ENCODE measurements at regions of chr11 and their contacts with region 1.

Region 1: GRCh38 chr11:6554828-6555706 is 48.3 kb downstream of the RRP8 start:
- DNase-seq: no peak
- ATAC-seq: no peak
- H3K4me3 ChIP-seq: no peak overlapping the region
- H3K4me3 Mint-ChIP-seq: no peak overlapping the region
- H3K27ac ChIP-seq: no peak overlapping the region
- H3K27ac Mint-ChIP-seq: no peak overlapping the region
- H3K4me1 ChIP-seq: no peaks in the 10 kb centered on the region
- H3K4me1 Mint-ChIP-seq: no peaks in the 10 kb centered on the region
- H3K27me3 ChIP-seq: no peaks in the 10 kb centered on the region
- H3K27me3 Mint-ChIP-seq: no peaks in the 10 kb centered on the region
- CTCF ChIP-seq: no peak

Region 2: GRCh38 chr11:6345366-6345765 is 209.7 kb before region 1 on chr11:
- CTCF ChIA-PET with region 1: no interaction called
- POLR2A ChIA-PET with region 1: no interaction called
- intact Hi-C with region 1: no loop called
- DNase-seq: no peak
- ATAC-seq: no peak
- H3K4me3 ChIP-seq: no peak overlapping the region
- H3K4me3 Mint-ChIP-seq: no peak overlapping the region
- H3K27ac ChIP-seq: no peak overlapping the region
- H3K27ac Mint-ChIP-seq: no peak overlapping the region
- H3K4me1 ChIP-seq: no peaks in the 10 kb centered on the region
- H3K4me1 Mint-ChIP-seq: no peaks in the 10 kb centered on the region
- H3K27me3 ChIP-seq: no peaks in the 10 kb centered on the region
- H3K27me3 Mint-ChIP-seq: peaks cover 13% of the 10 kb centered on the region
- CTCF ChIP-seq: no peak

Region 3: DNA sequence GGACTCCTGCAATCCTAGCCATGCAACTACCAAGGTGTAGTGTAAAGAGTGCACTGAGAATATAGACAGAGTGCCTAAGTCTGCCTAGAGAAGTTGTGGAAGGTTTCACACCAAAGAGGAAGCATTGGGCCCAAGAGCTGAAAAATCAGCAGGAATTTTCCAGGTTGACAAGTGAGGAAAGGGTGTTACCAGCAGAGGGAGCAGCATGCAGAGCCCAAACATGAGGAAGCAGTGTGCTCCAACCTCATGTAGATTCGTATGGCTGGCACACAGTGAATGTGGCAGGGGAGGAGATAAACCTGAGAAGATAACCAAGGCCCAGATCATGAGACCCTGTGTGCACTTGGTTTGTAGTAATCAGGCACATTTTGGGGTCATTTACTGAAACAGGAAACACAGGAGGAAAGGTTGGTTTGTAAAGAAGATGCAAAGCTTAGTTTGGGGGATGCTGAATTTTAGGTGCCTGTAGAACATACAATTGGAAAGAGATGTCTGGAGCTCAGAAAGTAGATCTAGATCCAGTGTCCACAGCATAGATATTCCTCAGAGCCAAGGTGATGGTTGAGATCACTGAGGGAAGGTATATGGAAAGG is 116.0 kb before region 1 on chr11:
- CTCF ChIA-PET with region 1: no interaction called
- POLR2A ChIA-PET with region 1: no interaction called
- intact Hi-C with region 1: no loop called
- DNase-seq: peak in 8 of 14 experiments; percentile 17 to 73 (median 37)
- ATAC-seq: peak; percentile 59
- H3K4me3 ChIP-seq: no peak overlapping the region
- H3K4me3 Mint-ChIP-seq: no peak overlapping the region
- H3K27ac ChIP-seq: no peak overlapping the region
- H3K27ac Mint-ChIP-seq: no peak overlapping the region
- H3K4me1 ChIP-seq: peaks cover 33% of the 10 kb centered on the region
- H3K4me1 Mint-ChIP-seq: no peaks in the 10 kb centered on the region
- H3K27me3 ChIP-seq: no peaks in the 10 kb centered on the region
- H3K27me3 Mint-ChIP-seq: no peaks in the 10 kb centered on the region
- CTCF ChIP-seq: peak; percentile 67

Region 4: DNA sequence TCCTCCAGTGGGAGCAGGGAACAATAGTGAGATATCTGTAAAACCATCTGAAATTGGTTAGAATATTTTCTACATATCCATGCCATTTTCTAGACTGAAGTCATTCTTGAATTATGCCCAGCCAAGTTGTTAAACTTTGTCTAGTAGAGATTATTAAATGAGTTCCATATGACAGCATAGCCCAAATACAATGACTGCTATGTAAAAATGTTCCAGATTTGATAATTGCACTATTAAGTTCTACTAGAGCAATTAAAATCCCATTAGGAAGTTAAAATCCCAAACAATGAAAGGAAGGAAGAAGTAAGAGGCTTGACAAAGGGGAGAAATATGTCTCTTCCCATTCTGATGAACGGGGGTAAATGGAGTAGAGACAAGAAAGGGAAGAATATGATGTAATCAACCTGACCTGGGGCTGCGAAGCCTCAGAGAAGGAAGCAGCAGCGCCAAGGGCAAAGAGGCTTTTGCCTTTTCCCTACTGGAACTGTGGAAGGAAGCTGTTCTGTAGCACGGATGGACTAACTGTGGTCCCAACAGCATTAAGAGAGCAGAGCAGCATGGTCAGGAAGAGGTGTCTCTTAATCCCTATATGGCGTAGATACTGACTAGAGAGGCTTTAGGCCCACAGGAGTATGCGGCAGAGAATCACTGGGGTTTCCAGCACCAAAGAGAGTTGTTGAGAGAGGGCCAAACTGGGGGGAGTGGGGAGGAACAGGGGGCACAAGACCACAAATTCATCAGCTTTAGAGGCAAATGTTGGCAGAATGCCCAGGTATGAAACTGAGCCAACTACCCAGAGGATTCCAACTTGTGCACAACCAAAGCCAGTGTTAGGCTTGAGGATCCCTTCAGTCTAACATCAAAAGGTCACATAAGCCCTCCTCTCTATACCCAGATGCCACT is 21.7 kb after region 1 on chr11:
- CTCF ChIA-PET with region 1: no interaction called
- POLR2A ChIA-PET with region 1: no interaction called
- intact Hi-C with region 1: loop called in 1 of 2 experiments (anchors 1 kb)
- DNase-seq: no peak
- ATAC-seq: no peak
- H3K4me3 ChIP-seq: no peak overlapping the region
- H3K4me3 Mint-ChIP-seq: no peak overlapping the region
- H3K27ac ChIP-seq: no peak overlapping the region
- H3K27ac Mint-ChIP-seq: no peak overlapping the region
- H3K4me1 ChIP-seq: no peaks in the 10 kb centered on the region
- H3K4me1 Mint-ChIP-seq: no peaks in the 10 kb centered on the region
- H3K27me3 ChIP-seq: no peaks in the 10 kb centered on the region
- H3K27me3 Mint-ChIP-seq: no peaks in the 10 kb centered on the region
- CTCF ChIP-seq: no peak

Region 5: DNA sequence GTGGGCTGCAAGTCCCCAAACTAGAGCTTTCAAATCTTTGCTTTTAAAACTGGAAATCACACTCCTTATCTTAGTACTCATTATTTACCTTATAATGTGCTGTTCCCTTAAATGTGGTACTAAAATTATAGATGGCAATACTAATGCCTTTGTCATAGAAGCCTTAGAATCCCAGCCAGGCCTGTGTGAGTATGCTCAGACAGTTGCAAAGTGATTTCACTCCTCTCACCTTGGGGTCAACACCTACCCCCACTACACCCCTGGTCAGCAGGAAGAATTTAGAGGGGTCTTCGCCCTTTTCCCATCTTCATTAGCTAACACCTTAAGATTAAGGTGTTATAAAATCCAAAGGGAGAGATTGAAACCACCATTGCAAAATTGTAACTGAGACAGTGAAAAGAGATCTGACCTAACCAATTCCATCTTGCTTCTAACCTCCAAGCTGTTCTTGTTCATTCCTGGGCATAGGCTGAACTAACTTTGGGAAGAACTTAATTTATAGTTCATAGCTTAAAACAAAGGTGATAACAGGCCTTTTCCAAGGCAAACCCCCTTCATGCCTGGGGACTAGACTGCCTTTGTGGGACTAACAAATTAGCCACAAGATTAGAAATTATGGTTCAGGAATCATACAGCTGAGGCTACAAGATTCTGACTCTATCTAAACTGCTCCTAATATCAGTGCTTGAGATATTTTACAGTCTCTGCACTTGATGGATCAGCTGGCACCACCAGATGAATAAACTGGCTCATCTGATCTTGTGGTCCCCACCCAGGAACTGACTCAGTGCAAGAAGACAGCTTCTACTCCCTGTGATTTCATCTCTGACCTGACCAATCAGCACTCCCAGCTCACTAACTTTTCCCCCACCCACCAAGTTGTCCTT is 138.5 kb after region 1 on chr11:
- CTCF ChIA-PET with region 1: no interaction called
- POLR2A ChIA-PET with region 1: no interaction called
- intact Hi-C with region 1: no loop called
- DNase-seq: peak in 10 of 14 experiments; percentile 16 to 84 (median 38)
- ATAC-seq: no peak
- H3K4me3 ChIP-seq: no peak overlapping the region
- H3K4me3 Mint-ChIP-seq: no peak overlapping the region
- H3K27ac ChIP-seq: no peak overlapping the region
- H3K27ac Mint-ChIP-seq: peak overlapping the region; percentile 48
- H3K4me1 ChIP-seq: peaks cover 9% of the 10 kb centered on the region
- H3K4me1 Mint-ChIP-seq: peaks cover 33% of the 10 kb centered on the region
- H3K27me3 ChIP-seq: no peaks in the 10 kb centered on the region
- H3K27me3 Mint-ChIP-seq: no peaks in the 10 kb centered on the region
- CTCF ChIP-seq: no peak

Region 6: GRCh38 chr11:6737872-6738466 is 182.9 kb after region 1 on chr11:
- CTCF ChIA-PET with region 1: no interaction called
- POLR2A ChIA-PET with region 1: no interaction called
- intact Hi-C with region 1: no loop called
- DNase-seq: peak; percentile 27 to 88 (median 57)
- ATAC-seq: peak; percentile 56
- H3K4me3 ChIP-seq: no peak overlapping the region
- H3K4me3 Mint-ChIP-seq: peak overlapping the region; percentile 12
- H3K27ac ChIP-seq: peak overlapping the region; percentile 2 to 56
- H3K27ac Mint-ChIP-seq: peak overlapping the region; percentile 76
- H3K4me1 ChIP-seq: peaks cover 62% of the 10 kb centered on the region
- H3K4me1 Mint-ChIP-seq: peaks cover 88% of the 10 kb centered on the region
- H3K27me3 ChIP-seq: no peaks in the 10 kb centered on the region
- H3K27me3 Mint-ChIP-seq: no peaks in the 10 kb centered on the region
- CTCF ChIP-seq: peak; percentile 77